Heart left ventricle (tissue), 16 donors: ENCODE measurements at regions of chr9 and their contacts with region 1.

Region 1: GRCh38 chr9:20622330-20623020 is at the start of gene MLLT3:
- DNase-seq: peak; percentile 96 to 99 (median 97)
- ATAC-seq: peak; percentile 95 to 98 (median 96)
- H3K4me3 ChIP-seq: peak within 1 kb of the TSS; percentile 69 to 95 (median 90)
- H3K27ac ChIP-seq: peak within 1 kb of the TSS; percentile 77 to 94 (median 88)
- H3K4me1 ChIP-seq: peaks cover 0 to 41% (median 26%) of the 10 kb centered on the region in 12 donors
- H3K27me3 ChIP-seq: no peaks in the 10 kb centered on the region
- CTCF ChIP-seq: peak in 4 of 12 donors; percentile 20 to 48 (median 36)
- POLR2A ChIP-seq: peak in 1 of 2 donors; percentile 73
- total RNA-seq, gene MLLT3: 10.8 to 21.0 (median 16.5) TPM

Region 2: DNA sequence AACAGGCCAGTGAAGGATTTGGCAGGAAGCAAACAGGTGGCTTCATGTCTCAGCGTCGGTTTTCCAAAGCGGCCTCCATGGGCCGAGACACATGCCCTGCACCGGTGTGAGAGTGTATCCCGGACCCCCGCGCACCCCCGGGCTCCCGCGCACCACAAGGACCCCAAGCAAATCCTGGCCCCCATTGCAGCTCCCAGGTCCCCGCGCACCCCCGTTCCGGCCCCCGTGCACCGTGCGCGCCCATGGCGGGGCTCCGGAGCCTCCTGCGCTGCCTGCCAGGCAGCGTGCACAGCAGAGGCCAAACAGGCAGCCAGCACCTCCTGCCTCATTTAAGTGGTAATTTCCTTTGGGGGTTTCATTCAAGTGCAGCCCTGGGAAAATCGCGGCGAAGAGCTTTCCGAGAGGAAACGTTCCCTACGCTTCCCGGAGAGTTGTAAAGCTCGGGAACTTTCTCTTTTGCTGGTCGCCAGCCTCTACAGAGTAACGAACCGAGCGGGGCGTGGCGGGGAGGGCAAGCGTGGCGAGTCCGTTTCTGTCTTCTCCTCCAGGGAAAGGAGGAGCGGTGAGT is 688.1 kb before region 1 on chr9:
- intact Hi-C with region 1: loop called in 7 of 10 experiments (anchors 5 to 10 kb)
- DNase-seq: peak; percentile 31 to 60 (median 33)
- ATAC-seq: peak in 3 of 4 donors; percentile 66 to 81 (median 69)
- H3K4me3 ChIP-seq: peak overlapping the region; percentile 22 to 70 (median 57)
- H3K27ac ChIP-seq: peak overlapping the region in 1 of 12 donors; percentile 46
- H3K4me1 ChIP-seq: peaks cover 0 to 9% (median 0%) of the 10 kb centered on the region in 12 donors
- H3K27me3 ChIP-seq: no peaks in the 10 kb centered on the region
- CTCF ChIP-seq: peak in 1 of 12 donors; percentile 21
- POLR2A ChIP-seq: no peak

Region 3: GRCh38 chr9:20441711-20442423 is 180.6 kb before region 1 on chr9:
- intact Hi-C with region 1: loop called in 1 of 10 experiments (anchors 10 kb)
- DNase-seq: no peak
- ATAC-seq: no peak
- H3K4me3 ChIP-seq: no peak overlapping the region
- H3K27ac ChIP-seq: no peak overlapping the region
- H3K4me1 ChIP-seq: peaks cover 0 to 47% (median 9%) of the 10 kb centered on the region in 12 donors
- H3K27me3 ChIP-seq: no peaks in the 10 kb centered on the region
- CTCF ChIP-seq: no peak
- POLR2A ChIP-seq: no peak

Region 4: DNA sequence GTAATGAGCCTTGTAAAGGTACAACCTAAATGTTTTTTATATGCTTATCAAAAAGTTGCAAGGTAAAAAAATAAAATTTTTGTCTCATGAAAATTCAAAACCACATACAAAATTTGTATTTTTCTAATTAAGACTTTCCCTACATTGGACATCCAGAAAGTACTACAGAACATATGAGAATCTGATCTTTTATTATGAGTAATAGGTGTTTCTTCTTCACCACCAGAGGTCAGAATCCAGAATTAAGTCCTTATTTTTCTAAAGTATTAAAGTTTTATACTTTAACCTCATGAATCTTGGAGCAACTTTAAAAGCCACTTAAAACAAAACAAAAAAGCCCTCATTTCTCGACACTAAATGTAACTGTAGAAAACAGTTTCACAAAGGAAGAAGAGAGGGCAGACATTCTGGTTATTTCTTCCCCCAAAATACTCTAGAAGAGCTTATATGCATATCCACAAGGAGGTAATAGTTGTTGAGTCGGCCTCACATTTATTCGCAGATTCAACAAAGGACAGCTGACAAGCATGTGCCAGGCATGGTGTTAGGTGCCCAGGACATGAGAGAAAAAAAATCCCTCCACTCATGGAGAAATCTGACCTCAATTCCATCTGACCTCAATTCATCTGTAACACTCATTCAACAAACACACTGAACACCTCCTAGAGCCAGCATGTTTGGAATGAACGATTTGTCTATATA is 69.5 kb before region 1 on chr9:
- intact Hi-C with region 1: loop called in 5 of 10 experiments (anchors 2 to 10 kb)
- DNase-seq: no peak
- ATAC-seq: peak in 1 of 4 donors; percentile 42
- H3K4me3 ChIP-seq: no peak overlapping the region
- H3K27ac ChIP-seq: no peak overlapping the region
- H3K4me1 ChIP-seq: peaks cover 0 to 57% (median 22%) of the 10 kb centered on the region in 12 donors
- H3K27me3 ChIP-seq: no peaks in the 10 kb centered on the region
- CTCF ChIP-seq: peak in 9 of 12 donors; percentile 13 to 47 (median 22)
- POLR2A ChIP-seq: no peak

Region 5: DNA sequence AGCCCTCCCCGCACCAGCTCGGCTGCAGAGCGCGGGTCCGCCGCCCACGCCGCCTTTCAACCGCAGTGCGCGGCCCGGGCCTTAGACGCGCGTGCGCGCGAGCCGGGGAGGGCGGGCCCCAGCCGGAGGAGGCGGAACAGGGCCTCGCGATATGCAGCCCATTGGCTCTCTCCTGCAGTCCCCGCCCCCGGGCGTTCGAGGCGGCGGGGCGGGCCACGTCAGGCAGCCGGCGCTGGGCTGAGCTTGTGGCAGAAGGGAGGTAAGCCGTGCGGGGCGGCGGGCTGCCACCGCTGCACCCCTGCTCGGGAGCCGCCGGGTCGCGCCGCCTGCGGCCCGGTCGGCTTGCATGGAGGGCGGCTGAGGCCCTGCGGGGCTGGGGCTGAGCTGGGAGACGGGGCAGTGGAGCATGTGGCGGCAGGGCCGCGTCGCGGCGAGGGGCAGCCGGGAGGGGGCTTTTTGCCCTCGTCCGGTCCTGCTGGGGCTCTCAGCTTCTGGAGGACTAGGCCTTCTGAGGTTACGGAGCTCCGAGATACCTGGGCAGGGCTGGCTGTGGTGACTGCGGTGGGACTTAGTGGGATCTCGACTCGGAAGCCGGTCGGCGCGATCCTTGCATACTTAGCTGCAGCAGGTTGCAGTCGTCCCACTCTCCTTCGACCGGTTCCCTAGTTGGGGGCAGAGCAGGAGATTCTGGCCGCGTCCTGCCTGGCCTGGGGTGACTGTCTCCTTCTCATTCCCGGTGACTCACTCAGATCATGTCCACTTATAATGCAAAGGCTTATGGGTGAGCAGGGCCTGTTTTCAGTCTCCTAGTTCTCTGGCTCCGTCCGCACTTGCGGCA is 61.8 kb after region 1 on chr9 and contains the start of gene FOCAD:
- intact Hi-C with region 1: loop called in 8 of 10 experiments (anchors 2 to 10 kb)
- DNase-seq: peak; percentile 96 to 98 (median 97)
- ATAC-seq: peak; percentile 98 to 100 (median 99)
- H3K4me3 ChIP-seq: peak within 1 kb of the TSS; percentile 80 to 95 (median 88)
- H3K27ac ChIP-seq: peak within 1 kb of the TSS; percentile 87 to 97 (median 94)
- H3K4me1 ChIP-seq: peaks cover 0 to 38% (median 22%) of the 10 kb centered on the region in 12 donors
- H3K27me3 ChIP-seq: no peaks in the 10 kb centered on the region
- CTCF ChIP-seq: peak in 3 of 12 donors; percentile 4 to 9 (median 5)
- POLR2A ChIP-seq: peak; percentile 92 to 99
- total RNA-seq, gene FOCAD: 25.1 to 39.5 (median 32.6) TPM

Region 6: GRCh38 chr9:20941174-20941690 is 318.8 kb after region 1 on chr9:
- intact Hi-C with region 1: loop called (anchors 1 to 10 kb)
- DNase-seq: peak in 3 of 5 donors; percentile 30 to 37 (median 34)
- ATAC-seq: peak; percentile 82 to 93 (median 88)
- H3K4me3 ChIP-seq: no peak overlapping the region
- H3K27ac ChIP-seq: no peak overlapping the region
- H3K4me1 ChIP-seq: peaks cover 0 to 6% (median 0%) of the 10 kb centered on the region in 12 donors
- H3K27me3 ChIP-seq: no peaks in the 10 kb centered on the region
- CTCF ChIP-seq: peak; percentile 76 to 94 (median 86)
- POLR2A ChIP-seq: no peak